Naive thymus-derived CD4-positive, alpha-beta T cell (primary cell): ENCODE measurements at regions of chr9 and their contacts with region 1.

Region 1: GRCh38 chr9:127916665-127917613 is at the start of gene ST6GALNAC4:
- DNase-seq: peak; percentile 82 to 97 (median 89)
- ATAC-seq: peak; percentile 98
- H3K4me3 ChIP-seq: peak within 1 kb of the TSS; percentile 86
- H3K4me3 Mint-ChIP-seq: peak within 1 kb of the TSS; percentile 76 to 91 (median 86)
- H3K27ac ChIP-seq: peak within 1 kb of the TSS; percentile 81
- H3K27ac Mint-ChIP-seq: peak within 1 kb of the TSS; percentile 69 to 95 (median 87)
- H3K4me1 ChIP-seq: peaks cover 28 to 39% of the 10 kb centered on the region in 2 donors
- H3K4me1 Mint-ChIP-seq: peaks cover 29 to 64% (median 51%) of the 10 kb centered on the region in 7 donors
- H3K27me3 ChIP-seq: no peaks in the 10 kb centered on the region
- H3K27me3 Mint-ChIP-seq: peaks cover 0 to under 1% (median 0%) of the 10 kb centered on the region in 5 donors
- total RNA-seq, gene ST6GALNAC4: 28.0 to 51.0 (median 36.1) TPM

Region 2: DNA sequence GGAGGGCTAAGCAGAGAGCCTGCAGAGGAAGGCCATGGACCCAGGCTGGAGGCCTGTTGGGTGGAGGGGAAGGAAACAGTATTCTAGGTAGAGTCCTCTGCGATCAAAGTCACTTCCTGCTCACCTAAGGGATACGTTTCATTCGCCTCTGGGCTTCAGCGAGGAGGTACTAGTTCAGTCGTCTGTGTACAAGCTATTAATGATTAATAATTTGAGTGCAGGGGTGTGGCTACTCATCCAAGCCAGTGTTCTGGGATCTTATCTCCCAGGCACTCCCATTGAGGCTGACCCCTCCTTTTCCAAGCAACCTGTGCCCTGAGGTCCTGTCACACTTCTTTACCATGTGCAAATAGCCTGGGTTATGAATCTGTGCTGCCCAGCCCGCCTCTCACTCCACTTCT is 977.1 kb before region 1 on chr9:
- CTCF ChIA-PET with region 1: no interaction called
- POLR2A ChIA-PET with region 1: no interaction called
- intact Hi-C with region 1: loop called (anchors 1 to 2 kb)
- DNase-seq: no peak
- ATAC-seq: no peak
- H3K4me3 ChIP-seq: no peak overlapping the region
- H3K4me3 Mint-ChIP-seq: no peak overlapping the region
- H3K27ac ChIP-seq: no peak overlapping the region
- H3K27ac Mint-ChIP-seq: no peak overlapping the region
- H3K4me1 ChIP-seq: no peaks in the 10 kb centered on the region
- H3K4me1 Mint-ChIP-seq: peaks cover 4 to 7% (median 5%) of the 10 kb centered on the region in 7 donors
- H3K27me3 ChIP-seq: no peaks in the 10 kb centered on the region
- H3K27me3 Mint-ChIP-seq: peaks cover 0 to 39% (median 22%) of the 10 kb centered on the region in 5 donors

Region 3: DNA sequence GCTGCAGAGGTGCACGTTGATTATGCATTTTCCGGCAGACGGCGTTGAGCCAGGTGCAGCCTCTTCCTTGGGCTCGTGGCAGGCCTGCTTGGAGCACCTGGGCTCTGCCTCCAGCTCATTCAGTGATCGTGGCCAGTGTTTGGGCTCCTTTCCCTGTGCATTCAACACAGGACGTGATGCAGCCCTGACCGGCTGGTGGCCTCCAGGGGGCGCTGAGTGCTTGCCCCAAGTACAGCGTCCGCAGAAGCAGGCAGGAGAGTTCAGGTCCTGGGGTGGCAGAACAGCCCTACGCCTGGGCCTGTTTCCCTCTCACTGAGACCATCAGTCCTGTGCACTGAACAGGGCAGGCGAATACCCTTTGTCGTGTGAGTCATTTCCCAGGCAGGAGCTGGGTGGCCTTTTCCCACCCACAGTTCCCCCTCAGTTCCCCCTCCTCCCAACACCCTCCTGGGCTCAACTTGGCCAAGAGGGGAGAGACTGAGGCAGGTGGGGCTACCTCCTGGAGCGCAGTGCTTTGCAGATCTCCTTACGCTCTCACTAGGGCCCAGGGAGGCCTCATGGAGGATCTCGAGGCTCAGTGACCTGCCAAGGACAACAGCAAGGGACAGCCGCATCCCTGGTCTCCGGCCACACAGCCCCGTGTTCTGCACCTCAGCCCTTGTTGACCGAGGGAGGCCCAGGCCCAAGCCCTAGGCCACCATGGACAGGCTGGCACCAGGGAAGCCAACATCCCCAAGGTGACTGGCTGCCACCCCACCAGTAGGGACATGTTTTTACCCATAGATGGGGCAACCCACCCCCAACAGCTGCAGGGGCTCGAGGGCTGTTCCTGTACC is 412.8 kb before region 1 on chr9:
- CTCF ChIA-PET with region 1: interaction called, 6 read pairs
- POLR2A ChIA-PET with region 1: no interaction called
- intact Hi-C with region 1: loop called (anchors 1 kb)
- DNase-seq: peak; percentile 65 to 81 (median 75)
- ATAC-seq: peak; percentile 87
- H3K4me3 ChIP-seq: no peak overlapping the region
- H3K4me3 Mint-ChIP-seq: no peak overlapping the region
- H3K27ac ChIP-seq: no peak overlapping the region
- H3K27ac Mint-ChIP-seq: peak overlapping the region in 1 of 9 donors; percentile 69
- H3K4me1 ChIP-seq: no peaks in the 10 kb centered on the region
- H3K4me1 Mint-ChIP-seq: peaks cover 0 to 4% (median 0%) of the 10 kb centered on the region in 7 donors
- H3K27me3 ChIP-seq: no peaks in the 10 kb centered on the region
- H3K27me3 Mint-ChIP-seq: no peaks in the 10 kb centered on the region

Region 4: DNA sequence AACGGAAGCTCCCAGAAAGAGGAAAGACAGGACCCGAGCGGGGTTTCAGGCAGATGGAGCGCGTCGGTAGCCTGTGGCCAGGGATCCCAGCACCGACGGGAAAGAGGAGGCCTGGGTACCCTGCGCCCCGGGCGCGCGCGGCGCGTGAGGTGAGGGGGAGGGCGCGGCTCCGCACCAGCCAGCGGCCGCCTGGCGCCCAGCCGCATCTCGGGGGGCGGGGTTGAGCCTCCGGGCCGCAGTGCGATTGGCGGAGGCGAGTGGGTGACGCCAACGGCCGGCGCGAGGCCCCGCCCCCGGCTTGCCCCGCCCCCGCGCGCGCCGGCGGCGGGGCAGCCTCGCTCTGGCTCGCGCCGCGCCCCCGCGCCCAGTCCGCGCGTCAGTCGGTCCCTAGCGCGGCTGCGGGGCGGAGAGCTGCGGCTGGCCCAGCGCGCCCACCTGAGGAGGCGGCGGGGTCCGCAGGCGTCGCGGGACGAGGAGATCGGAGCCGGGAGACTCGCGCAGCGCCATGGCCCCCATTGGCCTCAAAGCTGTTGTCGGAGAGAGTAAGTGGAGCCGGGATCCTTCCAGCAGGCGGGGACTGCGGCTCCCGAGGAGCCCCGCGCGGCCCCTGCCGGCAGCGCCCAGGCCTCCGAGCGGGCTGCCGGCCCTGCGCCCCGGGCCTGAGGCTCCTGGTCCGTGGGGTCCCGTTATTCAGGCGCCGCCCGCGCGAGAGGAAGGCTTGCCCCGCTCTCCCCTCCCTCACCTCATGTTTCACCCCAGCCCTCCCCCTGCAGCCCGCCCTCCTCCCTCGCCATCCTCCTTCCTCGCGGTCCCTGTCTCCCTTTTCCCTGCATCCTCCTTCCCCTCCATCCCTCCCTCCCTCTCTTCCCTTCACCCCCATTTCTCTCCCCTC is 304.8 kb before region 1 on chr9 and contains the start of gene STXBP1:
- CTCF ChIA-PET with region 1: no interaction called
- POLR2A ChIA-PET with region 1: no interaction called
- intact Hi-C with region 1: loop called (anchors 2 to 5 kb)
- DNase-seq: peak; percentile 68 to 96 (median 79)
- ATAC-seq: peak; percentile 93
- H3K4me3 ChIP-seq: peak within 1 kb of the TSS; percentile 89
- H3K4me3 Mint-ChIP-seq: peak within 1 kb of the TSS; percentile 90 to 99 (median 96)
- H3K27ac ChIP-seq: peak within 1 kb of the TSS; percentile 51
- H3K27ac Mint-ChIP-seq: peak within 1 kb of the TSS; percentile 66 to 93 (median 86)
- H3K4me1 ChIP-seq: peaks cover 11 to 16% of the 10 kb centered on the region in 2 donors
- H3K4me1 Mint-ChIP-seq: peaks cover 32 to 42% (median 37%) of the 10 kb centered on the region in 7 donors
- H3K27me3 ChIP-seq: no peaks in the 10 kb centered on the region
- H3K27me3 Mint-ChIP-seq: peaks cover 0 to 40% (median 17%) of the 10 kb centered on the region in 5 donors
- total RNA-seq, gene STXBP1: 6.7 to 17.8 (median 14.1) TPM

Region 5: GRCh38 chr9:127869310-127870152 is 47.4 kb before region 1 on chr9:
- CTCF ChIA-PET with region 1: interaction called, 18 read pairs
- POLR2A ChIA-PET with region 1: interaction called, 7 read pairs
- intact Hi-C with region 1: loop called in 1 of 2 experiments (anchors 1 kb)
- DNase-seq: peak; percentile 44 to 91 (median 62)
- ATAC-seq: peak; percentile 85
- H3K4me3 ChIP-seq: no peak overlapping the region
- H3K4me3 Mint-ChIP-seq: no peak overlapping the region
- H3K27ac ChIP-seq: no peak overlapping the region
- H3K27ac Mint-ChIP-seq: peak overlapping the region in 1 of 9 donors; percentile 32
- H3K4me1 ChIP-seq: peaks cover 12 to 13% of the 10 kb centered on the region in 2 donors
- H3K4me1 Mint-ChIP-seq: peaks cover 12 to 19% (median 16%) of the 10 kb centered on the region in 7 donors
- H3K27me3 ChIP-seq: no peaks in the 10 kb centered on the region
- H3K27me3 Mint-ChIP-seq: no peaks in the 10 kb centered on the region

Region 6: GRCh38 chr9:127899128-127899946 is 17.6 kb before region 1 on chr9 and contains the start of gene ST6GALNAC6:
- CTCF ChIA-PET with region 1: interaction called, 4 read pairs
- POLR2A ChIA-PET with region 1: interaction called, 81 read pairs
- intact Hi-C with region 1: loop called in 1 of 2 experiments (anchors 1 kb)
- DNase-seq: peak in 8 of 9 donors; percentile 46 to 90 (median 57)
- ATAC-seq: peak; percentile 94
- H3K4me3 ChIP-seq: peak within 1 kb of the TSS; percentile 68
- H3K4me3 Mint-ChIP-seq: peak within 1 kb of the TSS; percentile 74 to 90 (median 88)
- H3K27ac ChIP-seq: peak within 1 kb of the TSS; percentile 78
- H3K27ac Mint-ChIP-seq: peak within 1 kb of the TSS; percentile 36 to 91 (median 85)
- H3K4me1 ChIP-seq: peaks cover 24 to 26% of the 10 kb centered on the region in 2 donors
- H3K4me1 Mint-ChIP-seq: peaks cover 20 to 59% (median 39%) of the 10 kb centered on the region in 7 donors
- H3K27me3 ChIP-seq: no peaks in the 10 kb centered on the region
- H3K27me3 Mint-ChIP-seq: no peaks in the 10 kb centered on the region
- total RNA-seq, gene ST6GALNAC6: 63.0 to 125 (median 107) TPM

Region 7: GRCh38 chr9:128020692-128021091 is 103.8 kb after region 1 on chr9:
- CTCF ChIA-PET with region 1: no interaction called
- POLR2A ChIA-PET with region 1: no interaction called
- intact Hi-C with region 1: no loop called
- DNase-seq: no peak
- ATAC-seq: no peak
- H3K4me3 ChIP-seq: no peak overlapping the region
- H3K4me3 Mint-ChIP-seq: peak overlapping the region in 6 of 10 donors; percentile 30 to 90 (median 60)
- H3K27ac ChIP-seq: peak overlapping the region; percentile 4
- H3K27ac Mint-ChIP-seq: peak overlapping the region; percentile 79 to 100 (median 98)
- H3K4me1 ChIP-seq: peaks cover 46 to 47% of the 10 kb centered on the region in 2 donors
- H3K4me1 Mint-ChIP-seq: peaks cover 40 to 83% (median 70%) of the 10 kb centered on the region in 7 donors
- H3K27me3 ChIP-seq: no peaks in the 10 kb centered on the region
- H3K27me3 Mint-ChIP-seq: peaks cover 0 to 2% (median 0%) of the 10 kb centered on the region in 5 donors

Region 8: GRCh38 chr9:128552153-128552743 is 635.3 kb after region 1 on chr9 and contains the start of gene SPTAN1:
- CTCF ChIA-PET with region 1: no interaction called
- POLR2A ChIA-PET with region 1: no interaction called
- intact Hi-C with region 1: no loop called
- DNase-seq: peak; percentile 92 to 98 (median 96)
- ATAC-seq: peak; percentile 94
- H3K4me3 ChIP-seq: peak within 1 kb of the TSS; percentile 84
- H3K4me3 Mint-ChIP-seq: peak within 1 kb of the TSS in 7 of 10 donors; percentile 85 to 94 (median 92)
- H3K27ac ChIP-seq: peak within 1 kb of the TSS; percentile 94
- H3K27ac Mint-ChIP-seq: peak within 1 kb of the TSS; percentile 92 to 98 (median 97)
- H3K4me1 ChIP-seq: peaks cover 44 to 45% of the 10 kb centered on the region in 2 donors
- H3K4me1 Mint-ChIP-seq: peaks cover 15 to 38% (median 34%) of the 10 kb centered on the region in 7 donors
- H3K27me3 ChIP-seq: no peaks in the 10 kb centered on the region
- H3K27me3 Mint-ChIP-seq: no peaks in the 10 kb centered on the region
- total RNA-seq, gene SPTAN1: 336 to 433 (median 375) TPM